ENCODE measurements at regions of chr1 and their contacts with region 1.

Region 1: DNA sequence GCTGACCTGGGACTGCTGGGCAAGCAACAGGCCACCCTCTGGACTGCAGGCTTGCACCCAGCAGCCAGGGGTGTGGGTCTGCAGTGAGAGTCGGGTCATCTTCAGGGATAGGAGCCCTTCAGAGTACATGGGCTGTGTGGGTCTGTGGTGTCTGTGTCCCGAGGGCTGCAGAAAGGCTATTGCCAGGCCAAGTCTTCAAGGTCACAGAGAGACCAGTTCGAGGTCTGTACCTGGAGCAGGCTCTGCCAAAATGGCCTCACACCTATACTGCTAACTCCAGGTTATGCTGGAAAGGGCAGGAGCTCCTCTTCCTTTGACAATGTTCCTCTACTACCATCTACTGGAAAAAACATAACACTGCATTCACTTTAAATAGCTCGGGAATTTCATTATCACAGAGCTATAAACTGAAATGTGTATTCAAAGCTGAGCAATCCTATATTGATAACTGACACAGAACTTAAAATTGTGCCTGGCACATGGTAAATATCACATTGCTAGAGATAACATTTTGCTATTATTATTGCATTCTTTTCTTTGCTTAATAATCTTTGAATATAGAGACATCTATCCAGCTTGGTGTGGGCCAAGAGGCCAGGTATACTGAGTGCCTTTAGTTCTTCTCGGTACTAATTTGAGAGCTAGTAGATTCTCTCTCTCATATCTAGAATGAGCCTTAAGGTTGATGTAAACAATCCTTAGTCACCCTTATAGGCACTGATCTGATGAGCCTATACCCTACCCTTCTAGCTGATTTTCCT is 6.9 kb upstream of the DNAH14 start:
- DNase-seq: peak; percentile 27
- H3K4me3 ChIP-seq: no peak overlapping the region
- H3K27ac ChIP-seq: no peak overlapping the region
- H3K4me1 ChIP-seq: no peaks in the 10 kb centered on the region
- CTCF ChIP-seq: peak; percentile 79

Region 2: GRCh38 chr1:224644553-224645154 is 277.9 kb before region 1 on chr1:
- CTCF ChIA-PET with region 1: interaction called, 4 read pairs
- POLR2A ChIA-PET with region 1: no interaction called
- intact Hi-C with region 1: loop called (anchors 5 kb)
- DNase-seq: peak; percentile 64
- H3K4me3 ChIP-seq: no peak overlapping the region
- H3K27ac ChIP-seq: no peak overlapping the region
- H3K4me1 ChIP-seq: no peaks in the 10 kb centered on the region
- CTCF ChIP-seq: peak; percentile 92

Region 3: DNA sequence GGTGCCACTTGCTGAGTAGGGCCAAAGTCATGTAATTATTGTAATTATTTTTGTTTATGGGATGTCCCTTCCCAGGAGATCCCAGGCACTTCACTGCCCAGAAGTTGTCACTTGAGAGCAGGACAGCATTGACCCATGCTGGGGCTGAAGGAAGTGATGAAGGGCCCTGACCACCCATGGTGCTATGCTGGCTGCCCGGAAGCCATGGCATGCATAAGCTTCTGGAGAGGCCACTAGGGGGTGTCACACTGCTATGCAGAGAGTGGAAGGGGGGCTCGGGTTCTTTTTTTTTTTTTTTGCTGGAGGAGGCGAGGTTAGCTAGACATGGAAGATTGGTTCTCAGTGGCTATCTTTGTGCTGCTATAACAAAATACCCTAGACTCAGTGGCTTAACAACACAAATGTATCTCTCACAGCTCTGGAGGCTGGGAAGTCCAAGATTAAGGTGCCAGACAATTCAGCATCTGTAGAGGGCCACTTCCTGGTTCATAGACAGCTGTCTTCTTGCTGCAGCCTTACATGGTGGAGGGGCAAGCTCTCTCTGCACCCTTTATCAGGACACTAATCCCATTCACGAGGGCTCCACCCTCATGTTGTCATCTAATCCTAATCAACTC is 221.6 kb before region 1 on chr1:
- CTCF ChIA-PET with region 1: no interaction called
- POLR2A ChIA-PET with region 1: interaction called, 3 read pairs
- intact Hi-C with region 1: loop called (anchors 5 kb)
- DNase-seq: peak; percentile 68
- H3K4me3 ChIP-seq: no peak overlapping the region
- H3K27ac ChIP-seq: no peak overlapping the region
- H3K4me1 ChIP-seq: no peaks in the 10 kb centered on the region
- CTCF ChIP-seq: peak; percentile 85

Region 4: DNA sequence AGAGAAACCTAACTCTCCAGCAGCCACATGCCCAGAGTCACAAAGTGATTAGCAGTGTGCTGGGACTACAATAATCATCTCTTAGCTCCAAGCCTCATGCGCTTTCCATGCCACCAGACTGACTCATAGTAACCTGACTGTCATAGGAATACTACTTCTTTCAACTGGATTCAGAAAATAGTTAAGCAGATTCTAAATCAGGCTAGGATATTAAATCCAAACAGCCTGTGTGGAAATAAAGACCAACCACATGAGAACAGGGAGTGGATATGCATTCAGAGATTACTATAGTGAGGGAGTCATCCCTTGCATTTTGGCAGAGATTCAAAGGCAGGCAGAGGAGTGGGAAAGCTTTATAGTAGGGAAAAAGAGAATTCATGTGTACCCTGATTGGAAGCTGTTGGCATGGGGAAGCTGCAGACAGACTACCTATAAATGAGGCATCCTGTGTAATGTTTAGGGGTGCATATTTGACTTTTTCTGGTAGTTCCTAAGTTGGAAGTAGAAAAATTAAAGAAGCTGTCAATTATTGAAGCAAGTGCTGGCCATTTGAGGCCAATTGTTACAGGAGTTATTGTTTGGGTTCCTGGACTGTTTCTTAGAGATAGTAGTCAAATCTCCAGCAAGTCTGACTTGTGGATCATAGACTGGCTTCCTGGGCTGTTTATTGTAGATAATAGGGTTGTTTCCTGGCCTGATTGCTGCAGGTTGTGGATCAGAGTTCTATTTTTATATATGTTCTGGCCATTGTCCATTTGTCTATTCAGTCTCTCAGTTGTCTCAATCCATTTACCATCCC is 24.9 kb before region 1 on chr1:
- CTCF ChIA-PET with region 1: no interaction called
- POLR2A ChIA-PET with region 1: no interaction called
- intact Hi-C with region 1: no loop called
- DNase-seq: no peak
- H3K4me3 ChIP-seq: no peak overlapping the region
- H3K27ac ChIP-seq: no peak overlapping the region
- H3K4me1 ChIP-seq: no peaks in the 10 kb centered on the region
- CTCF ChIP-seq: no peak